Right cardiac atrium (tissue), 5 donors: ENCODE measurements at regions of chr22 and their contacts with region 1.

Region 1: DNA sequence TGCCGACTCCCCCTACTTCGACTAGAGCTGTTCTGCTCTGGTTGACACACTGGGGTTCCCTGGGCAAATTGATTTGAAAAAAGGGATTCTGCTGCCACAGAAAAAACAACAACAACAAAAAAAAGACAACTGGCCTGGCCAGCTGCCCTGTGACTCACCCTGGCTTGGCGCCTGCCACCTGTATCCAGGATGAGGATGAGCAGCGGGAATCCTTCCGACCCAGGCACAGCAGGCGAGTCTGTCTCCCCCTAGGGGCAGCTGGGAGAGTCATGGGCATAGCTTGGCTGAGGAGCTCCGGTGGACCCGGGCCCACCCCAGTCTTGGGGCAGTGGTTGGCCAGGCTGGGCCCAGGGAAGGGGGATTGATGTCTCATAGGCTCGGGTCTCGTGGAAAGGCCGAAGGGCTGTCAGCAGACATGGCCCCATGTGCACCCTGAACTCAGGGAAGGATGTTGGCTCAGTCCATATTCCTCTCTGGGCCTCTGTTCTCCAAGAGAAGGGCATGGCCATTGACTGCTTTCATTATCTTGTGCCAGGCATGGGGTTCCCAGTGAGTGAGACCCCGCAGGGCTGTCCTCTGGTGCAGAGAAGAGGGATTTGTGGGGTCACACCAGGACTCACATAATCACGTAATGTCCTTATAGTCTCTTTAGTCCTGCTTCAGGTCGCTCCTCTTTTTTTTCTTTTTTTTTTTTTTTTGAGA is 10.4 kb upstream of the SUN2 start:
- DNase-seq: peak in 2 of 3 donors; percentile 41 to 76
- ATAC-seq: peak; percentile 20 to 22
- H3K4me3 ChIP-seq: no peak overlapping the region
- H3K27ac ChIP-seq: no peak overlapping the region
- H3K4me1 ChIP-seq: no peaks in the 10 kb centered on the region
- H3K27me3 ChIP-seq: no peaks in the 10 kb centered on the region

Region 2: GRCh38 chr22:38843201-38843715 is 77.0 kb after region 1 on chr22:
- intact Hi-C with region 1: loop called in 3 of 4 experiments (anchors 5 to 10 kb)
- DNase-seq: peak; percentile 57 to 83 (median 77)
- ATAC-seq: peak; percentile 66 to 80
- H3K4me3 ChIP-seq: peak overlapping the region; percentile 83
- H3K27ac ChIP-seq: no peak overlapping the region
- H3K4me1 ChIP-seq: no peaks in the 10 kb centered on the region
- H3K27me3 ChIP-seq: no peaks in the 10 kb centered on the region

Region 3: GRCh38 chr22:38996105-38996504 is 229.9 kb after region 1 on chr22:
- intact Hi-C with region 1: loop called in 2 of 4 experiments (anchors 5 to 10 kb)
- DNase-seq: peak in 1 of 3 donors; percentile 24
- ATAC-seq: no peak
- H3K4me3 ChIP-seq: no peak overlapping the region
- H3K27ac ChIP-seq: no peak overlapping the region
- H3K4me1 ChIP-seq: no peaks in the 10 kb centered on the region
- H3K27me3 ChIP-seq: no peaks in the 10 kb centered on the region

Region 4: DNA sequence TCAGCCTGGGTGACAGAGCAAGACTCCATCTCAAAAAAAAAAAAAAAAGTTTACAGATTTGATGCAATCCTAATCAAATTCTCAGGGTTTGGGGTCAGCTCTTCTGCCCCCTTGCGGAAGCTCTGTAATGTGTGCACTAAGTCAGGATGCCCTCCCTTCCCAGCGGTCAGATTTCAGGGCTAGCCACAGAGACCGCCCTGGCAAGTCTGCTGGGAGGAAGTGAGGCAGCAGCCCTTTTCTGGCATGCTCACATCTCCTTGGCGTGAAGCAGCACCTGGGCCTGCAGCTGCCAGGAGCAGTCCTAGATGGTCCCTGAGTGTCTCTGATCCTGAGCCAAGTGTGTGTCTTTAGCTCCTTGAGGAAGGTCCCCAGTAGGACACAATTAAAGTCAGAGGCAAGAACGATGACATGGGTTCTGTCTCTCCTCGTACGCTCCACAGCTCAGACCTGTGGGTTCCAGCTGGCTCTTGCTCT is 237.0 kb after region 1 on chr22:
- intact Hi-C with region 1: loop called in 2 of 4 experiments (anchors 5 to 10 kb)
- DNase-seq: peak; percentile 77 to 88 (median 82)
- ATAC-seq: peak; percentile 91 to 93
- H3K4me3 ChIP-seq: no peak overlapping the region
- H3K27ac ChIP-seq: no peak overlapping the region
- H3K4me1 ChIP-seq: no peaks in the 10 kb centered on the region
- H3K27me3 ChIP-seq: no peaks in the 10 kb centered on the region